ENCODE measurements at regions of chr3 and their contacts with region 1.

Region 1: GRCh38 chr3:153551536-153552285 is 389.7 kb downstream of the RAP2B start:
- DNase-seq: no peak
- H3K4me3 Mint-ChIP-seq: no peak overlapping the region
- H3K27ac Mint-ChIP-seq: no peak overlapping the region
- H3K4me1 Mint-ChIP-seq: no peaks in the 10 kb centered on the region
- H3K27me3 Mint-ChIP-seq: no peaks in the 10 kb centered on the region
- CTCF ChIP-seq: no peak

Region 2: GRCh38 chr3:153572654-153573053 is 20.9 kb after region 1 on chr3:
- CTCF ChIA-PET with region 1: interaction called, 3 read pairs
- POLR2A ChIA-PET with region 1: no interaction called
- intact Hi-C with region 1: loop called (anchors 1 kb)
- DNase-seq: no peak
- H3K4me3 Mint-ChIP-seq: no peak overlapping the region
- H3K27ac Mint-ChIP-seq: no peak overlapping the region
- H3K4me1 Mint-ChIP-seq: peaks cover 13% of the 10 kb centered on the region
- H3K27me3 Mint-ChIP-seq: no peaks in the 10 kb centered on the region
- CTCF ChIP-seq: no peak